ENCODE measurements at regions of chr9 and their contacts with region 1.

Region 1: GRCh38 chr9:111037381-111038305 is 627 bp downstream of the LPAR1 start:
- DNase-seq: no peak
- ATAC-seq: peak; percentile 60
- H3K4me3 Mint-ChIP-seq: no peak overlapping the region
- H3K27ac Mint-ChIP-seq: no peak overlapping the region
- H3K4me1 Mint-ChIP-seq: peaks cover 10% of the 10 kb centered on the region
- H3K27me3 Mint-ChIP-seq: peaks cover 33% of the 10 kb centered on the region
- CTCF ChIP-seq: no peak

Region 2: GRCh38 chr9:111298731-111299598 is 261.3 kb after region 1 on chr9:
- CTCF ChIA-PET with region 1: no interaction called
- POLR2A ChIA-PET with region 1: no interaction called
- intact Hi-C with region 1: loop called (anchors 10 kb)
- DNase-seq: no peak
- ATAC-seq: no peak
- H3K4me3 Mint-ChIP-seq: no peak overlapping the region
- H3K27ac Mint-ChIP-seq: no peak overlapping the region
- H3K4me1 Mint-ChIP-seq: no peaks in the 10 kb centered on the region
- H3K27me3 Mint-ChIP-seq: peaks cover 10% of the 10 kb centered on the region
- CTCF ChIP-seq: peak; percentile 85

Measured in activated CD8-positive, alpha-beta T cell treated with anti-CD3 and anti-CD28 coated beads for 36 hours (primary cell).